HEK293T (cell line): ENCODE measurements at regions of chr17 and their contacts with region 1.

Region 1: DNA sequence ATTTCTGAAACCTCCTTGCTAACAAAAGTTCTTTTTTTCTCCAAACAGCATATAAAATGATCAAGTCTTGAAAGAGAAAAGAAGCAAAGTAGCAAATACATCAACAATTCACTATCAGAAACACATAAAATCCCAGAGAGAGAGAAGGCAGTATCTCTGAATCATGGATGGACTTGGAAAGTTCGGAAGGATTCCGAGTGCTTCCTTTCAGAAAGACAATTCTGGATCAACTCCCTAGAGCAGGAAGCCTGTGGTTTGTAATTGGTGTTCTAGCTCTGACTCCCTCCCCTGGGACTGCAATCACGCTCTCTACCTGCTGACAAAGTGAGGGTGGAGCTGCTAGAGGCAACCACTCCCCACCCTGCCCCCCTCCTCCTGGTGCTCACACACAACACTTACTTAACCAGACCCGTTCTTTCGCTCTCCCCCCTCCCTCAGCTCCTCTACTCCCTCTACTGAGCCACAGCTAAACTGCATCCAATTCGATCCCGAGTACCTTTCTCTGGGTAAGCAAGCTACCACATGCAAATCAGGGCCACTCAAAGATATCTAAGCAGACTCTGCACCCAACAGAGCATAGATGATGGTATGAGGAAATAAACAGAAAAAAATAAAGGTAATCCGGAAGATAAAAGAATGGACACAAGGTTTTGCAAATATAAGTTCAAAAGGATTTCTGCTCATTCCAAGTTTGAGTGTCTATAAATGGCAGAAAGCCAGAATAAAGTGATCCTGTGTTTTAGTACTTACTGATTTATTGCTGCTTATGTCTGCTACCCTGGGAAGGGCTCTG is at the start of gene RNF43:
- DNase-seq: peak; percentile 92

Region 2: DNA sequence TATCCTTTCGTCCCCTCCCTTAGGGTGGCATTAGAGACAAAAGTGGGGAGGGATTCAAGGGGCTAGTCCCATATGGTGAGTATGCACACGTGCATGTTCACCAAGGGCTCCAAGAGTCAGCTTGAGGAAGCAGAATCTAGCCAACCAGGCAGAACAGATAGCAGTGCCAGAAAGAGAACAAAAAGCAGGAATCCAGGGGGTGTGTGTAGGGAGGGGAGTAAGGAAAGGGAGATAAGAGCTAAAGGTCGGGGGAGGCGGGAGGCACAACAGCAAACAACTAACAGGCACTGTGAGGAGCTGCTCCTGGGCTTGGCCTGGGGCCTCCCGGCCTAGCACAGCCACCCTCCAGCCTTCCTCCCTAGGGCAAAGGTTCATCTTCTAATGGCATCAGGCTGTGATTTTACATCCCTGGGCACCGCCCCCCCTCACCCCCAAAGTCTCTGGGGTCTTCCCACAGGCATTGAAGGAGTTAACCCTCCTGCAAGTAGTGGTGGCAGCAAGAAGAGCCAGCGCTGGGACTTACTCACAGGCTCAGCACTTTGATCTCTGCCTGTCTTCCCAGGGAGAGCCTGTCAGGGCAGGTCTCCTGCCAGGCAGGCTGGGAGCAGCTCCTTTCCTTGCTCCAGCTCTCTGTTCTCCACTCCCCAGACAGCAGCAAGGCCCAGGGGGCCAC is 53.1 kb before region 1 on chr17:
- CTCF ChIA-PET with region 1: interaction called, 4 read pairs
- POLR2A ChIA-PET with region 1: interaction called, 10 read pairs
- DNase-seq: no peak

Region 3: DNA sequence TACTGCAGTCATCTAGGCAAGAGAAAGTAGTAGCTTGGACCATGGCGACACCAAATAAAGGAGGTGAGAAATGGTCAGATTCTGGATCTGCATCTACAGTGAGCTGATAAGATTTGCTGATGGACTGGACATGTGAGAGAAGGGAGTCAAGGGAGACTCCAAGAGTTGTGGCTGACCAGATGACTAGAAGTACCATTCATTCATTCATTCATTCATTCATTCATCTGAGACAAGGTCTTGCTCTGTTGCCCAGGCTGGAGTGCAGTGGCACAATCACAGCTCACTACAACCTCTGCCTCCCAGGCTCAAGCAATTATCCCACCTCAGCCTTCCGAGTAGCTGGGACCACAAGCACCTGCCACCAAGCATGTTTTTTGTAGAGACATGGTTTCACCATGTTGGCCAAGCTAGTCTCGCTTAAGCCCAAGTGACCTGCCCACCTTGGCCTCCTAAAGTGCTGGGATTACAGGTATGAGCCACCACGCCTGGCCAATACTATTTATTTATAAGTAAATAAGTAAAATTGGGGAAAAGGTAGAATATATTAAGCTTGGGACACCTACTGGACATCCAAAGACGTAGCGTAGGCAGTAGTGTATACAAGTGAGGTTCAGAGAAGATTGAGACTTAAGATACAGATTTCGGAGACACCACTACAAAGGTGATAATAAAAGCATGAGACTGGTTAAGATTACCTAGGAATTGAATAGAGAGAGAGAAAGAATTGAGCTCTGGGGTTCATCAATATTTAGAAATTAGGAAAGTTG is 15.5 kb after region 1 on chr17:
- CTCF ChIA-PET with region 1: interaction called, 18 read pairs
- POLR2A ChIA-PET with region 1: interaction called, 3 read pairs
- DNase-seq: no peak

Region 4: DNA sequence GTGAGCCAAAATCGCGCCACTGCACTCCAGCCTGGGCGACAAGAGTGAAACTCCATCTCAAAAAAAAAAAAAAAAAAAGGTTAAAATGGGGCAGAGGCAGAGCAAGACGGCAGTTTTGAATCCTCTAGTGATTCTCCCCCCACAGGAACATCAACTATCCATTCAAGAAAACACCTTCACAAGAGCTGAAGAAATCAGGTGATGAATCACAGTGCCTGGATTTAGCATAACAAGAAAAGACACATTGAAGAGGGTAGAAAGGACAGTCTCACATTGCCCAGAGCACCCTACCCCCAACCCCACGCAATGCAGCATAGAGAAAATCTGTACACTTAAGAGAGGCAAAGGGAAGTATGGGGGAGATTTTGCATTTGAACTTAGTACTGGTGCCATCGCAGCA is 28.6 kb after region 1 on chr17:
- CTCF ChIA-PET with region 1: no interaction called
- POLR2A ChIA-PET with region 1: no interaction called
- DNase-seq: no peak